MCF 10A (cell line): ENCODE measurements at regions of chr22 and their contacts with region 1.

Region 1: GRCh38 chr22:37588546-37589215 is 8.8 kb upstream of the LGALS2 start:
- DNase-seq: no peak
- H3K4me3 Mint-ChIP-seq: no peak overlapping the region
- H3K27ac Mint-ChIP-seq: no peak overlapping the region
- H3K4me1 Mint-ChIP-seq: peaks cover 12% of the 10 kb centered on the region
- H3K27me3 Mint-ChIP-seq: no peaks in the 10 kb centered on the region
- CTCF ChIP-seq: no peak

Region 2: DNA sequence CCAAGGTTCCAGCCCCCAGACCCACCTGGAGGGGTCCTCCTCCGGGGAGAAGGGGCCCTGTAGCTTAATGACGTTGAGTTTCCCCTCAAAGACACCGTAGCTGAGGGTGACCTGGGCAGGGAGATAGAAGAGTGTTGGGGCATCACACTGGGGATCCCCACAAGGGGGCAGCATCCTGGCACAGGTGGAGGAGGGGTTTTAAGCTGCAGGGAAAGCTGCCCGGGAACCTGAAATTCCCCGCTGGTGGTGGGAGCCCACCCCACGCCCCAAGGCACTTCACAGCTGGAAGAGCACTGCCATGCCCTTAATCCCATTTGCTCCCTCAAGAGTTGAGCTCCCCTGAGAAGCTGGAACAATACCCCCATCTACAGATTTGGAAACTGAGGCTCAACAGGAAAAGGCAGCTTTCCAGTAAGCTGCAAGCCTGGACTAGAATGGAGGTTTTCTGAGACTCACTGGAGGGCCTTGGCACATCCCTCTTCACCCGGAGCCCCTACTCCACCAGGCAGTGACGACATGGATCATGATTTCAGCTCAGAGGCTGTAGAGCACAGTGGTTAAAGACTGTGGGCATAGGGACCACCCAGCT is 116.2 kb before region 1 on chr22:
- CTCF ChIA-PET with region 1: interaction called, 3 read pairs
- POLR2A ChIA-PET with region 1: no interaction called
- intact Hi-C with region 1: loop called (anchors 1 kb)
- DNase-seq: peak; percentile 57
- H3K4me3 Mint-ChIP-seq: no peak overlapping the region
- H3K27ac Mint-ChIP-seq: no peak overlapping the region
- H3K4me1 Mint-ChIP-seq: no peaks in the 10 kb centered on the region
- H3K27me3 Mint-ChIP-seq: no peaks in the 10 kb centered on the region
- CTCF ChIP-seq: peak; percentile 63

Region 3: DNA sequence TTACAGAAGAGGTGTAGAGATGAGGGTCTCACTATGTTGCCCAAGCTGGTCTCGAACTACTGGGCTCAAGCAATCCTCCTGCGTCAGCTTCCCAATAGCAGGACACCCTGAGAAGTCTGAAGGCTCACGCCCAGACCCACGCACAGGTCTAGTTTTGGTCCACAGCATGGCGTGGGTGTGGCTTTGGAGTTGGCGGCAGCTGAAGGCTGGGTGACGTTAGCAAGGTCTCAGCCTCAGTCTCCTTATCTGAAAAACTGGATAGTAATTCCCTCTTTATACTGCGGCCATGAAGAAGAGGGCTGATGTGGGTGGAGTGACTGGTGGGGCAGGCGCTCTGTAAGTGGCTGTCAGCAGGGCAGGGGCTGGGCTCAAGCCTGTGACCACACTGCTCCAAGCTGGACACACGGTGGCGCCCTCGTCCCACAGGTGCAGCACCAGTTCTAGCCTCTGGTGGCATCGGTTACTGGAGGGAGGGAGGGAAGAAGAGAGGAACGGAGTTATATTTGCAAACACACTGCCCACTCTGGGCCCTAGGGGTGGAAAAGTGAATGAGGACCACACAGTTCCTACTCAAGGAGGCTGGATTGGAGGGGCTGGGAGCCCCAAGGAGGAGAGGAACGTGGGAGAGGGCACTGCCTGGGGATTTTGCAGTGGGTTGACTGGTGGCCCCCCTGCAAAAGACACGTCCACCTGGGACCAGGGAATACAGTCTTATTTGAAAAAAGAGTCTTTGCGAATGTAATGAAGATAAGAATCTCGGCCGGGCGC is 49.9 kb before region 1 on chr22:
- CTCF ChIA-PET with region 1: interaction called, 31 read pairs
- POLR2A ChIA-PET with region 1: interaction called, 15 read pairs
- intact Hi-C with region 1: loop called (anchors 1 kb)
- DNase-seq: peak; percentile 95
- H3K4me3 Mint-ChIP-seq: no peak overlapping the region
- H3K27ac Mint-ChIP-seq: peak overlapping the region; percentile 34
- H3K4me1 Mint-ChIP-seq: peaks cover 32% of the 10 kb centered on the region
- H3K27me3 Mint-ChIP-seq: no peaks in the 10 kb centered on the region
- CTCF ChIP-seq: peak; percentile 97

Region 4: GRCh38 chr22:37544955-37545699 is 43.6 kb before region 1 on chr22:
- CTCF ChIA-PET with region 1: interaction called, 31 read pairs
- POLR2A ChIA-PET with region 1: interaction called, 8 read pairs
- intact Hi-C with region 1: loop called (anchors 1 kb)
- DNase-seq: peak; percentile 91
- H3K4me3 Mint-ChIP-seq: peak overlapping the region; percentile 50
- H3K27ac Mint-ChIP-seq: peak overlapping the region; percentile 78
- H3K4me1 Mint-ChIP-seq: peaks cover 28% of the 10 kb centered on the region
- H3K27me3 Mint-ChIP-seq: no peaks in the 10 kb centered on the region
- CTCF ChIP-seq: peak; percentile 79

Region 5: DNA sequence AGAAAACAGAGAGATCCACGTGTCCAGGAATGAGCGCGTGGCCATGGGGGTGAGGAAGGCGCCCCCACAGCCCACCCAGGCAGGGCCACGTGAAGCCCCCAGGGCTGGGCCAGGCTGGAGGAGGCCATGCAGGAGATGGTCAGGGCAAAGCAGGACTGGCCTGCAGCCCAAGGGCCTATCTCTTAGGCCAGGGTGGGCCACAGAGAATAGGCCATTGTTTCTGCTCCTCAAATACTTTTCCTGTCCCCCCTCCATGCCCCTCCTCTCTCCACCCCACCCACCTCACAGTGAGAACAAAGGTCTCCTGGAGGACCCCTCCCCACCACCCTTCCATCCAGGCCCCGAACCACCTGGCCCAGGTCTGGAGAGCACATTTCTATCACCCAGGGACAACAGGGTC is 36.7 kb before region 1 on chr22:
- CTCF ChIA-PET with region 1: interaction called, 13 read pairs
- POLR2A ChIA-PET with region 1: interaction called, 8 read pairs
- intact Hi-C with region 1: no loop called
- DNase-seq: no peak
- H3K4me3 Mint-ChIP-seq: no peak overlapping the region
- H3K27ac Mint-ChIP-seq: no peak overlapping the region
- H3K4me1 Mint-ChIP-seq: peaks cover 4% of the 10 kb centered on the region
- H3K27me3 Mint-ChIP-seq: no peaks in the 10 kb centered on the region
- CTCF ChIP-seq: no peak

Region 6: GRCh38 chr22:37575490-37576003 is 13.1 kb before region 1 on chr22:
- CTCF ChIA-PET with region 1: interaction called, 131 read pairs
- POLR2A ChIA-PET with region 1: interaction called, 9 read pairs
- intact Hi-C with region 1: no loop called
- DNase-seq: no peak
- H3K4me3 Mint-ChIP-seq: no peak overlapping the region
- H3K27ac Mint-ChIP-seq: no peak overlapping the region
- H3K4me1 Mint-ChIP-seq: peaks cover 3% of the 10 kb centered on the region
- H3K27me3 Mint-ChIP-seq: no peaks in the 10 kb centered on the region
- CTCF ChIP-seq: no peak

Region 7: DNA sequence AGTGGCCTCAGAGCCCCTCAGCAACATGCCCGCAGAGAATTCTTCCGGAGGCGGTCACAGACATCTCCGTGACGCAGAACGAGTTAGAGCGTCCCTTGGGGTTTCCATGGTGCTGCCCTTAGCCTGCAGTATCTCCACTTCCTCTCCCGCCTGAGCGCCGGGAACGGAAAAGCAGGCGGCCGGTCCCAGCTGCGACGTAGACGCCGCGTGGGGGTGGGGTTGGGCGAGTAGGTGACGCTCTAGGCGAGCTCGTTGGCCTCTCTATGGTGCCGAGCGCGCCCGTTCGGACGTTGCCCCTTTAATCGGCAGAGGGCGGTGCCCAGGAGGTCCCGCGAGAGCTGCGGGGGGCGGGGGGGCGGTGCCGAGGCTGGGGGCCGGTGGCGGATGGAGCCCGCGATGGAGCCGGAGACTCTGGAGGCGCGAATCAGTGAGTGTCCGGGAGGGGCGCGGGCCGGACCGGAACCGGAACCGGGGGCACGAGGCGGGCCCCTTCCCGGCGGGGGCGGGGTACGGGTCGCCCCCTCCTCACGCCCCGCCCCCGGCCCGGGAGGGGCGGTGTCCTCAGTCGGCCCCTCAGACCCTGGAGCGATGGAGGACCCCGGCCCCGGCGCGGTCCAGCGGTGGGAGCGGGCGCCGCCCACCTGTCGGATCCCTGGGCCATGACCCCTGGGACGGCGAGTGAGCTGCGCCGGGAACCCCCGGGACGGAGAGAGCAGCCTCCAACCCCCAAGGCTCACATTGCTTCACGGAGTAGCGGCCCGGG is 20.0 kb after region 1 on chr22 and contains the start of gene GGA1:
- CTCF ChIA-PET with region 1: interaction called, 10 read pairs
- POLR2A ChIA-PET with region 1: interaction called, 18 read pairs
- intact Hi-C with region 1: no loop called
- DNase-seq: peak; percentile 96
- H3K4me3 Mint-ChIP-seq: peak within 1 kb of the TSS; percentile 85
- H3K27ac Mint-ChIP-seq: peak within 1 kb of the TSS; percentile 98
- H3K4me1 Mint-ChIP-seq: peaks cover 12% of the 10 kb centered on the region
- H3K27me3 Mint-ChIP-seq: no peaks in the 10 kb centered on the region
- CTCF ChIP-seq: no peak
- total RNA-seq, gene GGA1: 52.7 and 59.1 TPM in 2 replicates

Region 8: GRCh38 chr22:37658133-37659065 is 69.7 kb after region 1 on chr22 and contains the start of gene PDXP:
- CTCF ChIA-PET with region 1: no interaction called
- POLR2A ChIA-PET with region 1: no interaction called
- intact Hi-C with region 1: no loop called
- DNase-seq: peak; percentile 100
- H3K4me3 Mint-ChIP-seq: peak within 1 kb of the TSS; percentile 89
- H3K27ac Mint-ChIP-seq: peak within 1 kb of the TSS; percentile 87
- H3K4me1 Mint-ChIP-seq: peaks cover 22% of the 10 kb centered on the region
- H3K27me3 Mint-ChIP-seq: no peaks in the 10 kb centered on the region
- CTCF ChIP-seq: no peak
- total RNA-seq, gene PDXP: 10.3 and 10.5 TPM in 2 replicates